KBM-7 (cell line): ENCODE measurements at regions of chr2 and their contacts with region 1.

Region 1: GRCh38 chr2:11583840-11584524 is 50.1 kb downstream of the GREB1 start:
- DNase-seq: peak; percentile 90

Region 2: GRCh38 chr2:10798783-10799182 is 785.2 kb before region 1 on chr2:
- in situ Hi-C with region 1: no loop called
- DNase-seq: no peak

Region 3: GRCh38 chr2:10832203-10832936 is 751.6 kb before region 1 on chr2:
- in situ Hi-C with region 1: loop called (anchors 25 kb)
- DNase-seq: peak; percentile 85

Region 4: GRCh38 chr2:11477994-11478393 is 106.0 kb before region 1 on chr2:
- in situ Hi-C with region 1: loop called (anchors 25 kb)
- DNase-seq: peak; percentile 68